Cardiac septum (tissue), 1 donor: ENCODE measurements at regions of chr12 and their contacts with region 1.

Region 1: GRCh38 chr12:94101738-94102660 is 46.4 kb upstream of the PLXNC1 start:
- DNase-seq: peak; percentile 91

Region 2: DNA sequence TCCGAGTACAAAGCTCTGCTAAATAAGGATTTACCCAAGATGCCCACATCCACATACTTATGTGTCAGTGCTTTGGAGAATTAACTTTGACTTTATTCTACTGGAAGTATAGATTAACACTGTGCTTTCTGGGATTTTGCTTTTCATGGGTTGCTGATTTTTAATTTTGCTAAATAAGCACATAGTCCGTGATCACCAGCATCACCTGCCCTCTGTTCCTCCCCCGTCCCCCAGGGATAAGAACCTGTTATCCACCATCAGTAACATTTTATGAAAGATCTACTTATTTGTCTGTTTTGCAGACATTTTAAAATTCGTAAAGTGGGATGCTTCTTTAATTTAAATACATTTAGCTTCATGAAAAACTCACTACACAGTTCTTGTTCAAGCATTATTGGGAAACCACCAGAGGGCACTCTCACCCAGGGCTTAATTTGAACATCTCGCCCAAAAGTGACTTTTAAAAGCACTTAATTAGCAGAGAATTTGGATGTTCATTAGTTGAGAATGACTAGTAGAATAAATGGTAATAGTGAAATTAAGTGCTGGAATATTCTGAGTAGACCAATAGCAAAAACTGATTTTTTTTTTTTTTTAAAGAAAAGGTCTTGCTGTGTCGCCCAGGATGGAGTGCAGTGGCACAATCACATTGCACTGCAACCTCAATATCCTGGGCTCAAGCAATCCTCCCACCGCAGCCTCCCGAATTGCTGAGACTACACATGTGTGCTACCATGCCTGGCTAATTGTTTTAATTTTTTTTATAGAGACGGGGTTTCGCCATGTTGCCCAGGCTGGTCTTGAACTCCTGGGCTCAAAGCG is 599.0 kb before region 1 on chr12:
- intact Hi-C with region 1: loop called (anchors 2 kb)
- DNase-seq: no peak

Region 3: DNA sequence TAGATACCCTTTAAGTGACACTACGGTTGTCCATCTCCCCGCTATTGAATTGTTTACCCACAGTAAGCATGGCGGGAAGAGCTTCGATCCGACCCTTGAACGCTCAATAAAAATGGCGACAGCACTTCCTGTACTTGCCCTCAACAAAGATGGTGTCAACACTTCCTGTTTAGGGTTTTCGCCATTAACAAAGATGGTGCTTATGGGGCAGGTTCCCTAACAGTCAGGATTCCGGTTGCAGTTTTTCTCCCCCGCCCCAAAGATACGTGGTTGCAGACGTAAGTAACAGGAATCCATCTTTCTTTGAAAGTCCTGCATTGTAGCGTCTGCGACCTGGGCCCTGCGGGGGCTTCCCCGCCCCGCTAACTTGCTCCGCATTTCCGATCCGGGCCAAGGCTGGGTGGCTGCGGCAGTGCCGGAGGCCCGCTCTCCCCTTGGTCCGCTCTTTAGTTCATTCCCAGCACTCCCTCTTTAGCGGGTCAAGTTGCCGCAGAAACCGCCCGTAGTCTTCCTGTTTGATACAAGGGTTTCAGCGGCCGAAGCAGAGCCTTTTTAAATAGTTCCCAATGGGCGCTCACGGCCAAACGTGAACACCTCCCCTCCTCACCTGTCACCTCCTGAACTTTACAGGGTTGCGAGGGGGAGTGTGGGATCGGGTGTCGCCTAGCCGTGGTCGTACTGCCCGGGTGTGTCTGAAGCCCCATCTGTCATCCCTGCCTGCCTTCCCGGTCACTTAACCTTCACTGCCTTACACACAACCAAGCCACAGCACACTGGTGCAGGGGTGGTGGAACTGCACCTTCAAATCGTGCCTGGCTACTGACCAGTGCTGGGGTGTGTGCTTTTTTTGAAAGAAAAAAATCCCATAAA is 424.6 kb before region 1 on chr12 and contains the start of gene CRADD:
- intact Hi-C with region 1: loop called (anchors 5 kb)
- DNase-seq: peak; percentile 87
- total RNA-seq, gene CRADD: 50.8 TPM

Region 4: DNA sequence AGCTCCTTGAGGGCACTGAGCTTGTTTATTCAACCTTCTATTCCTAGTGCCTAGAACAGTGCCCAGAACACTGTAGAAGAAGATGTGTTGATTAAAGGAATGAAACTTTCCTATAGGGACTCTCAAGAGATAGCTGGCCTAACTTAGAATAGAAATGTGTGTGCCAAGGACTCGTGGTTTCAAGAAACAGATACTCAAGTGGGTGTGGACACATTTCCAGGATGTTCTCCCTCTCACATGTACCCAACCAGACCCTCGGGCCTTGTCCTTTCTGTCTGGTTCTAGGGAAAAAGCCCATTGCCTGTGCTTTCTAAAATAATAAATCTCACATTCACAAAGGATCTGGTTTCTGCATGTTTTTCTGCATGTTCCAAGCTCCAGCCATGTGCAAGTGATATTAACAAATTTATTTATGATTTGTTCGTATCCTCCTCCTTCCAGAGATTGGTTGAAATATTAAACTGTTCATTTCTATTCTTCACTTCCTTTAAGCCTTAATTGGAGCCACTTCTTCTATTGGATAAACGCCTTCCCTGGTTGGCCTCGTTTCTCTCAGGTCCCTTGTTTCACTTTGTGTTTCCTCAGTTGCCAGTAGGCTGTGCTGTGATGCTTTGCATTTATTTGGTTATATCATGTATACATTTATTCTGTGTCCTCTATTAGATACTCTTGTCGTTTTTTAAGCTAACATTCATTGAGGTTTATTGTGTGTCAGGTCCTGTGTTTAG is 335.0 kb before region 1 on chr12:
- intact Hi-C with region 1: loop called (anchors 5 kb)
- DNase-seq: no peak

Region 5: DNA sequence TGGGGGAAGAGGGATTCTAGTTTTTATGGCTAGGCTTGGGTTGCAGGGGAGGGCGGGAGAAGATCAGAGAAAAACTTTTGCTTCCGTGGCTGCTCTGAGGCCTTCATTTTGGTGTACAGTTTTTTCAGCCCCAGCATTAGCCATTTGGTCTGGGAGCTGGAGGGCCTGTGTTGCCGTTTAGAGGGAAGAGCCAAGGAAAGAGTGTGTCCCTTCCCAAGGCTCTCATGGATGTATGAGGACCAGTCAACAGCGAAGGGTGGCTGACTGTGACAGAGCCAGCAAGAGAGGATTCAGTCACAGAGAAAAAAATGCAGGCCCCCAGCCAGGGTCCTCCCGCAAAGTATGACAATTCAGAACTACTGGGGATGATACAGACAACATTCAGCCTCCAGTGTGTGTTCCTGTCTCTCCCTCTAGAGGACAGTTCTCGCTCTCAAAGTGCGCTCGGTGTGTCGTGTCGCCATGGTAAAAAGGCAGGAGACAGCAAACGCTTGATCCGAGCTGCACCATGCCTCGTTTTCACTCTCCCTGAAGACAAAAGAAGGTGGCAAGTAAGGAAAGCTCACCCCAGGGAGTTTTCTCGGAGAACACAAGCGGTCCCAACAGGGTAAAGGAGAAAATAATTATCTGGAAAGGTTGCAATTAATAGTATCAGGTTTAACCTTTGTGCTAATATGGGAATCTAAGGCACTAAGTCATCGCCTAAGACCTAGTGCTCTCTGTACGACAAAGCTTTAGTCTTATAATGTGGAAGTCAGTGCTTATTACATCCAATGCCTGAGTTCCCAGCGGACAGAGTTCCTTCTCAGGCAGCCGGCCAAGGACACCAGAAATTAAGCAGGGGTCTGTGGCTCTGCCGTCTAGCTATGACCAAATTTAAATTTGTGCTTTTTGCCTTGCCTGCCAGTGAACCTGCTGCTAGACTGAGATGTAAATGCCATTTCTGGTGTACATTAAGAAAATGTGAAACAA is 110.9 kb before region 1 on chr12:
- intact Hi-C with region 1: loop called (anchors 5 kb)
- DNase-seq: no peak